B cell (primary cell): ENCODE measurements at regions of chrX and their contacts with region 1.

Region 1: DNA sequence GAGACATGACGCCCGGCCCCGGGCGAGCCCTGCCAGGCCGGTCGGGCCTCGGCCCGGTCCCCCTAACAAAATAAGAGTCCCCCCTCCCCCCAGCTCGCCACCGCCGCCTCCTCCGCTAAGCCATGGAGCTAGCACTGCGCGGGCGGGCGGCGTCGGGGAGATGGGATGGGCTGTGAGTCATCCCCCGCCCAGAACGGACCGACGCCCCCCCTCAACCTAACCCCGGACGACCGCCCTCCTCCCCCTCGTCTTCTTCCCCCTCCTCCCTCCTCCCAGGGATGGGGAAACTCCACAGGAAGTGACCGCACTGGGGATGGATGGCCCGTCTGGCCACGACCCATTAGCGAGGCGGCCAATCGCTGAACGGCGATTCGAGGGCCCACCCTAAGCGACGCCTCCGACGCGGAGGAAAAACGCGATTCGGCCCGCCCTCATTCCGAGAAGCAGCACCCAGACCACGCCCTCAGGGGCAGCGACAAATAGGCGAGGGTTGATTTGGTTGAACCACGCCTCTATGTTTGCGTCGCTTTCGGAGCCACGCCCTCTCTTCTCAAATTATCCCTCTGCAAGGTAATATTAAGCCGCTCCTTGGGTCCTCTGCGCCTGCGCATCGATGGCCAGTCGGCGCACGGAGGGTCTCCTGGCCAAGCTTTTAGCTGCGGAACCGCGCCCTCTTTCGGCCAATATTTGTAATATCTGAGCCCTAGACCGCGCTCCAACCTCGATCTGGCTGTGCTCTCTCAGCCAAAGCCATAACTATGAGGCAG is at the start of gene TFE3:
- DNase-seq: peak; percentile 97
- ATAC-seq: peak; percentile 87
- H3K4me3 ChIP-seq: peak within 1 kb of the TSS; percentile 69 to 77 (median 73)
- H3K4me3 Mint-ChIP-seq: peak within 1 kb of the TSS; percentile 91
- H3K27ac ChIP-seq: peak within 1 kb of the TSS; percentile 91 to 96
- H3K27ac Mint-ChIP-seq: peak within 1 kb of the TSS; percentile 92
- H3K4me1 ChIP-seq: peaks cover 12 to 25% of the 10 kb centered on the region in 2 donors
- H3K4me1 Mint-ChIP-seq: peaks cover 28% of the 10 kb centered on the region
- H3K27me3 ChIP-seq: no peaks in the 10 kb centered on the region
- H3K27me3 Mint-ChIP-seq: no peaks in the 10 kb centered on the region
- CTCF ChIP-seq: peak; percentile 62
- total RNA-seq, gene TFE3: 38.9 and 42.1 TPM in 2 replicates

Region 2: GRCh38 chrX:48648336-48648751 is 395.1 kb before region 1 on chrX:
- CTCF ChIA-PET with region 1: interaction called, 5 read pairs
- POLR2A ChIA-PET with region 1: no interaction called
- intact Hi-C with region 1: loop called (anchors 1 kb)
- DNase-seq: peak; percentile 60
- ATAC-seq: peak; percentile 73
- H3K4me3 ChIP-seq: no peak overlapping the region
- H3K4me3 Mint-ChIP-seq: no peak overlapping the region
- H3K27ac ChIP-seq: no peak overlapping the region
- H3K27ac Mint-ChIP-seq: peak overlapping the region; percentile 70
- H3K4me1 ChIP-seq: no peaks in the 10 kb centered on the region
- H3K4me1 Mint-ChIP-seq: no peaks in the 10 kb centered on the region
- H3K27me3 ChIP-seq: no peaks in the 10 kb centered on the region
- H3K27me3 Mint-ChIP-seq: no peaks in the 10 kb centered on the region
- CTCF ChIP-seq: peak; percentile 65

Region 3: GRCh38 chrX:48891402-48892288 is 151.8 kb before region 1 on chrX:
- CTCF ChIA-PET with region 1: interaction called, 3 read pairs
- POLR2A ChIA-PET with region 1: no interaction called
- intact Hi-C with region 1: loop called (anchors 1 kb)
- DNase-seq: peak; percentile 87
- ATAC-seq: peak; percentile 84
- H3K4me3 ChIP-seq: peak overlapping the region in 4 of 5 experiments; percentile 46 to 65 (median 60)
- H3K4me3 Mint-ChIP-seq: peak overlapping the region; percentile 84
- H3K27ac ChIP-seq: peak overlapping the region in 1 of 2 donors; percentile 48
- H3K27ac Mint-ChIP-seq: peak overlapping the region; percentile 73
- H3K4me1 ChIP-seq: peaks cover 6 to 9% of the 10 kb centered on the region in 2 donors
- H3K4me1 Mint-ChIP-seq: peaks cover 19% of the 10 kb centered on the region
- H3K27me3 ChIP-seq: no peaks in the 10 kb centered on the region
- H3K27me3 Mint-ChIP-seq: no peaks in the 10 kb centered on the region
- CTCF ChIP-seq: peak; percentile 60

Region 4: DNA sequence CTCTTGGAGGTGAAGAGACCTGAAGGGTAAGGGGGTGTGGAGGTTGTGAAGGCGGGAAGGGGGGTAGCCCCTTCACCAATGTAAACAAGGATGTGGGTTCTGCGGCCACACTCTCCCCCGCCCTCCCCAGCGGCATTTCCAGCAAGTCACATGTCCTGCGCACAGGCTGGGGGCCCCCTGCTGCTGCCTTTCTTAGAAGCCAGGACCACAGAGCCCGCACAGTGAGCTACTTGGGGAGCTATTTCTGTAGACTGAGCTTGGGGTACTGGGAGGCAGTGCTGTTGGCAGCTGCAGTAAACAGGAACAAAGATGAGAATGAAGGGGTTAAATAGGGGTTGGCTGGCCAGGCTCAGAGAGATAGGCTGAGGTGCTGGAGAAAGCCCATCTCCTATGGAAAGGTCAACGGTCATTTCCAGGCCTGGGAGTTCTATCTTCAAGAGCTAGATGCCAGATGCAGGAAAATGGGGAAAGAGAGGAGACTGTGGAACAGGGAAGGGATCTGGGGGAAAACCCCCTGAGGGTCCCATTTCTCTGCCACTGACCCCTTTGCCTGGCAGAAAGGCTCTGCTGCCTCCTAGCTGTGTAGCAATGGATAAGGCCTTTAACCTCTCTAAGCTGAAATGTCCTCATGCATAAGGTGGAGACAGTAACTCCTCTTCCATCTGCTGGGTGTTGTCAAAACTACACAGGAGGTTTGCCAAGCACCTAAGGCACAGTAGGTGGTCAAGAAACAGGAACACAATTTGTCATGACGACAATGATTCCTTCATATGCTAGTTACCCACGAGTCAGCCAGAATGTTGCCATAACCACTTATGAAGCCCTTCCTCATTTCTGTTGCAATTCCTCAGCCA is 106.1 kb before region 1 on chrX:
- CTCF ChIA-PET with region 1: interaction called, 5 read pairs
- POLR2A ChIA-PET with region 1: interaction called, 4 read pairs
- intact Hi-C with region 1: loop called (anchors 1 kb)
- DNase-seq: peak; percentile 90
- ATAC-seq: peak; percentile 58
- H3K4me3 ChIP-seq: peak overlapping the region in 4 of 5 experiments; percentile 33 to 57 (median 36)
- H3K4me3 Mint-ChIP-seq: peak overlapping the region; percentile 84
- H3K27ac ChIP-seq: peak overlapping the region; percentile 99
- H3K27ac Mint-ChIP-seq: peak overlapping the region; percentile 99
- H3K4me1 ChIP-seq: peaks cover 91 to 97% of the 10 kb centered on the region in 2 donors
- H3K4me1 Mint-ChIP-seq: peaks cover 82% of the 10 kb centered on the region
- H3K27me3 ChIP-seq: no peaks in the 10 kb centered on the region
- H3K27me3 Mint-ChIP-seq: no peaks in the 10 kb centered on the region
- CTCF ChIP-seq: peak; percentile 67

Region 5: DNA sequence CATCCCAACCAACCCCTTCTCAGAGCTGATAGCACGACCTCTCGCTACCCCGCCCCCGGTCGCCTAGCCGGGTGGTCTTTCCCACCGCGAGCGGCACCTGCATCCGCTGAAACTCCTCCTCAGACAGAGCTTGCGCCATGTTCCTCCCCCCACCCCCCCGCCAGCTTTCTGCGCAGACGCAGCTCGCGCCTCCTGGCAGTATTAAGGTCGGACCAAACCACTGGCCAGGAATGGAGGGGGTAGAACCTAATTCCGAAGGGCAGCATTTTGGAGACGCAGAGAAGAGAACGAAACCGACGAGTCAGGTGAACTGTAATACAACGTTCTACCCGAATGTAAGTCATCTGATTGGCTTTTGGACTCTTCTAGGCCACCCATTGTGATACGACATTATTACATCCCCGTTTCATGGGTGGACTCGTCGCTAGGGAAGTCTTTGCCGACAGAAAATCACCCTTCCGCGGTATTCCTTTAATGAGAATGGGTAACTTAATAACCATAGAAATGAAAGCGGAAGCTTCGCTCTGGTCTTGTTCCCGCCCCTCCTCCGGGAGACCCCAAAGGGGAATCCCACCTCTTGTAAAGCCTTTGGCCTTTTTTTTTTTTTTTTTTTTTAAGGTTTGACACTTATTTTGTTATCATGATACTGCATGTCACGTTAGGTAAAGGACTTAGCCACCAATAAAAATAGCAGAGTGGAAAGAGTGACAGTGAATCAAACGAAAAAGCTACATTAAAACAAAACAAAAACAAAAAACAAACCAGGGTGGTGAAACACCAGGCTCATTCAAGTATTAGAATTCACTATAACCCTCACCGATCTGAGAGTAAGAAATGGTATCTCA is 41.1 kb before region 1 on chrX and contains the start of gene GRIPAP1:
- CTCF ChIA-PET with region 1: interaction called, 7 read pairs
- POLR2A ChIA-PET with region 1: interaction called, 9 read pairs
- intact Hi-C with region 1: loop called (anchors 1 kb)
- DNase-seq: peak; percentile 93
- ATAC-seq: peak; percentile 85
- H3K4me3 ChIP-seq: peak within 1 kb of the TSS; percentile 66 to 93 (median 86)
- H3K4me3 Mint-ChIP-seq: peak within 1 kb of the TSS; percentile 95
- H3K27ac ChIP-seq: peak within 1 kb of the TSS; percentile 97 to 99
- H3K27ac Mint-ChIP-seq: peak within 1 kb of the TSS; percentile 98
- H3K4me1 ChIP-seq: peaks cover 8 to 14% of the 10 kb centered on the region in 2 donors
- H3K4me1 Mint-ChIP-seq: peaks cover 28% of the 10 kb centered on the region
- H3K27me3 ChIP-seq: no peaks in the 10 kb centered on the region
- H3K27me3 Mint-ChIP-seq: no peaks in the 10 kb centered on the region
- CTCF ChIP-seq: no peak
- total RNA-seq, gene GRIPAP1: 143 and 150 TPM in 2 replicates

Region 6: DNA sequence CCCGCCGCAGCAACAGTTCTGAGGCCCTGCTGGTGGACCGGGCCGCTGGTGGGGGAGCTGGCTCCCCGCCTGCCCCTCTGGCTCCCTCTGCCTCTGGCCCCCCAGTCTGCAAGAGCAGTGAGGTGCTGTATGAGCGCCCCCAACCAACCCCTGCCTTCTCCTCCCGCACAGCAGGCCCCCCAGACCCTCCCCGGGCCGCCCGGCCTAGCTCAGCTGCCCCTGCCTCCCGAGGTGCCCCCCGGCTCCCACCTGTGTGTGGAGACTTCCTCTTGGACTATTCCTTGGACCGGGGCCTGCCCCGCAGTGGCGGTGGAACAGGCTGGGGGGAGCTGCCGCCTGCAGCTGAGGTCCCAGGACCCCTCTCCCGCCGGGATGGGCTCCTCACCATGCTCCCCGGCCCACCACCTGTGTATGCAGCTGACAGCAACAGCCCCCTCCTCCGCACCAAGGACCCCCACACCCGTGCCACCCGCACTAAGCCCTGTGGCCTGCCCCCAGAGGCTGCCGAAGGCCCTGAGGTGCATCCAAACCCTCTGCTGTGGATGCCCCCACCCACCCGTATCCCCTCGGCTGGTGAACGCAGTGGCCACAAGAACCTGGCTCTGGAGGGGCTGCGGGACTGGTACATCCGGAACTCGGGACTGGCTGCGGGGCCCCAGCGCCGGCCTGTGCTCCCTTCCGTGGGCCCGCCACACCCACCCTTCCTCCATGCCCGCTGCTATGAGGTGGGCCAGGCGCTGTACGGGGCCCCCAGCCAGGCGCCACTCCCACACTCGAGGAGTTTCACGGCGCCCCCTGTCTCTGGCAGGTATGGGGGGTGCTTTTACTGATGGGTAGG is 24.1 kb after region 1 on chrX:
- CTCF ChIA-PET with region 1: no interaction called
- POLR2A ChIA-PET with region 1: no interaction called
- intact Hi-C with region 1: no loop called
- DNase-seq: no peak
- ATAC-seq: no peak
- H3K4me3 ChIP-seq: no peak overlapping the region
- H3K4me3 Mint-ChIP-seq: no peak overlapping the region
- H3K27ac ChIP-seq: no peak overlapping the region
- H3K27ac Mint-ChIP-seq: no peak overlapping the region
- H3K4me1 ChIP-seq: peaks cover 0 to under 1% of the 10 kb centered on the region in 2 donors
- H3K4me1 Mint-ChIP-seq: peaks cover 1% of the 10 kb centered on the region
- H3K27me3 ChIP-seq: no peaks in the 10 kb centered on the region
- H3K27me3 Mint-ChIP-seq: no peaks in the 10 kb centered on the region
- CTCF ChIP-seq: no peak

Region 7: GRCh38 chrX:49163555-49164419 is 120.4 kb after region 1 on chrX:
- CTCF ChIA-PET with region 1: interaction called, 4 read pairs
- POLR2A ChIA-PET with region 1: no interaction called
- intact Hi-C with region 1: loop called (anchors 1 kb)
- DNase-seq: peak; percentile 89
- ATAC-seq: peak; percentile 56
- H3K4me3 ChIP-seq: peak overlapping the region in 4 of 5 experiments; percentile 39 to 62 (median 46)
- H3K4me3 Mint-ChIP-seq: peak overlapping the region; percentile 86
- H3K27ac ChIP-seq: peak overlapping the region; percentile 79 to 82
- H3K27ac Mint-ChIP-seq: peak overlapping the region; percentile 96
- H3K4me1 ChIP-seq: peaks cover 5 to 38% of the 10 kb centered on the region in 2 donors
- H3K4me1 Mint-ChIP-seq: peaks cover 26% of the 10 kb centered on the region
- H3K27me3 ChIP-seq: no peaks in the 10 kb centered on the region
- H3K27me3 Mint-ChIP-seq: no peaks in the 10 kb centered on the region
- CTCF ChIP-seq: peak; percentile 67